Esophagus muscularis mucosa (tissue), 4 donors: ENCODE measurements at regions of chr21 and their contacts with region 1.

Region 1: DNA sequence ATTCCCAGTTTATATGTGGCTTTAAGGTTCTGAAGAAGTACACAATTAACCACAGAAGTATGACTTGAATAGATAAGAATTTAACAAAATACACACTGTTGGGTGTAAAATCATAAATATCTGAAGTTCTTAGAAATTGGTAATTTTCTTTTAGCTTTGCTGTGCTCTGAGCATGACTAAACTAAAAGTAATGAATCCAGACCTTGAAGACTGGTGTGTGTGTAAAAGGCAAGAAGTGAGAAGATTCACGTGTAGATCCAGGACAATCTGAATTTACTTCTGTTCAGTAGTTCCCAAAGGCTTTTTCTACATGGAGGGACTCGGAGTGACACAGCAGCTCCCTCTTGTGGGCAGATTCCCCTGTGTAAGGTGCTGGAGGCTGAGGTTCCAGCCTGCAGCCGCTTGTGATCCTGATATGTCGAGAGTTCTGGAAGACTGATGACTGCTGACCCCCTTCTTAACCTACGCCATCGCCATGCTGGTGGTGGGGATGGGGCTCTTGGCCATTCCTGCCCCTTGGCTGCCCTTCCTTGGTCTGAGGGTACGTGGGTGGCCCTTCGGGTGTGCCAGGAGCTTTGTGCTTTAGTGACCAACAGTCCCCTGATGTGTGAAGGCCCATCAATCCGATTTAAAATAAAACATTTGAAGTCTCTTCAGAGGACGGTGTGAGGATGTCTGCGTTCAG is 62.7 kb downstream of the ADARB1 start:
- DNase-seq: peak; percentile 96
- H3K4me3 ChIP-seq: no peak overlapping the region
- H3K27ac ChIP-seq: peak overlapping the region; percentile 30 to 62 (median 53)
- H3K4me1 ChIP-seq: peaks cover 10 to 96% (median 85%) of the 10 kb centered on the region in 4 donors
- H3K27me3 ChIP-seq: no peaks in the 10 kb centered on the region
- CTCF ChIP-seq: peak; percentile 85 to 89 (median 86)
- EP300 ChIP-seq: no peak
- POLR2A ChIP-seq: no peak

Region 2: DNA sequence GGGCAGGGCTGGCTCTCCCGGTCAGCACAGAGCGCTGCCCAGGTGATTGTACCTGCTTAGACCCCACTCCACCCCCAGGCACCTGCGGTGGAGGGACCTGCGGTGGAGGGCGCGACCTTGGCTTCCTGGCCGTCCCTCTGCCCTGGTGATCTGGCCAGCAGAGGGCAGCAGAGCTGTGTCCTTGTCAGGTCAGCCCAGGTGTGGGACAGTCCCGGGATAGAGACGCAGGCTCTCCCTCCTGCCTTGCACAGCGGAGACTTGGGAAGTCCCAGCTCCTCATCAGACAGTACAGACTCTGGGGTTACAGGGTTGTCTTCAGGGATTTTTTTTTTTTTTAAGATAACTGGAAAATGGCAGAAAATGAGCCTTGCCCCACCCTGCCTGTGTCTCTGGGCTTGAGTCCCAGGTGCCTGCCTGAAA is 187.3 kb before region 1 on chr21:
- intact Hi-C with region 1: loop called (anchors 2 kb)
- DNase-seq: no peak
- H3K4me3 ChIP-seq: no peak overlapping the region
- H3K27ac ChIP-seq: peak overlapping the region; percentile 49 to 72 (median 58)
- H3K4me1 ChIP-seq: peaks cover 45 to 66% (median 53%) of the 10 kb centered on the region in 4 donors
- H3K27me3 ChIP-seq: no peaks in the 10 kb centered on the region
- CTCF ChIP-seq: peak; percentile 93 to 96 (median 93)
- EP300 ChIP-seq: no peak
- POLR2A ChIP-seq: no peak

Region 3: DNA sequence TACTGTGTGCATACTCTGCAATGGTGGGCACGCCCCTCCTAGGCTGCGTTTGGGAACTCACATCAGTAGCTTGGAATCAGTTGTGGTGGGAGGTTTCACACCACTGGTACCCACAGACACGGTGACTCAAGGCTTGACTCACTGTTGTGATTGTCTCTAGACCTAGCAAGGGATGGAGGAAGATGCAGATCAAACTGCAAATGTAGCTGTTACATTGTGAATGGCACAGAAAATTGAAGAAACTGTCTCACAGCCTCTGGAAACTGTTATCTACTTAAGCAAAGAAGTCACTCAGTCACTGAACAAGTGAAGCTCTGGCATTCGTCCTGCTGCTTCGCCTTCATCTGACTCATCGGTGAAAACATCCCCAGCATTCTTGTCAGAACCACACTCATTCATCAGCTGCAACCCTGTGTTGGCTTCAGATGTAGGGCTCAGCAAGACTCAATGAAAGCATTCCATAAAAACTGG is 91.1 kb after region 1 on chr21:
- intact Hi-C with region 1: loop called (anchors 5 kb)
- DNase-seq: no peak
- H3K4me3 ChIP-seq: no peak overlapping the region
- H3K27ac ChIP-seq: no peak overlapping the region
- H3K4me1 ChIP-seq: peaks cover 0 to 18% (median 17%) of the 10 kb centered on the region in 4 donors
- H3K27me3 ChIP-seq: no peaks in the 10 kb centered on the region
- CTCF ChIP-seq: no peak
- EP300 ChIP-seq: no peak
- POLR2A ChIP-seq: no peak